Activated CD4-positive, alpha-beta T cell treated with anti-CD3 and anti-CD28 coated beads for 36 hours (primary cell): ENCODE measurements at regions of chr11 and their contacts with region 1.

Region 1: GRCh38 chr11:26286472-26287066 is 45.4 kb upstream of the ANO3 start:
- DNase-seq: peak; percentile 3
- ATAC-seq: no peak
- H3K4me3 Mint-ChIP-seq: no peak overlapping the region
- H3K27ac Mint-ChIP-seq: no peak overlapping the region
- H3K4me1 Mint-ChIP-seq: peaks cover 3% of the 10 kb centered on the region
- H3K27me3 Mint-ChIP-seq: peaks cover 9% of the 10 kb centered on the region

Region 2: DNA sequence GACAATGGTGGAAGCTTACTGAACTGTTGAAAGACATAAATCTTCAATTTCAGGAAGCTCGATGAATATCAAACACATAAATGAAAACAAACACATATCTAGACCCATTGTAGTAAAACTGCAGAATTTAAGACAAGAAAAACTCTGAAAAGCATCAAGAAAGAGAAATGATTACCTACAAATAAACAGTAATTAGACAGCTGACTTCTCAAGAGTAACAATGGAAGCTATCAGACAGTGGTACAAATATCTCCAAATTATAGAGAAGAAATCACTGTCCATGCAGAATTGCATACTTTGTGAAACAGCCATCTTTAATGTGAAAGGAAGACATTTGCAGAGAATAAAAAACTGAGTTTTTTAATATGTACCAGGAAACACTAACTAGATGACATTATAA is 91.0 kb after region 1 on chr11:
- CTCF ChIA-PET with region 1: no interaction called
- POLR2A ChIA-PET with region 1: no interaction called
- intact Hi-C with region 1: no loop called
- DNase-seq: no peak
- ATAC-seq: no peak
- H3K4me3 Mint-ChIP-seq: no peak overlapping the region
- H3K27ac Mint-ChIP-seq: no peak overlapping the region
- H3K4me1 Mint-ChIP-seq: no peaks in the 10 kb centered on the region
- H3K27me3 Mint-ChIP-seq: no peaks in the 10 kb centered on the region

Region 3: GRCh38 chr11:26649884-26650283 is 363.3 kb after region 1 on chr11:
- CTCF ChIA-PET with region 1: no interaction called
- POLR2A ChIA-PET with region 1: no interaction called
- intact Hi-C with region 1: loop called (anchors 2 to 5 kb)
- DNase-seq: peak; percentile 54
- ATAC-seq: no peak
- H3K4me3 Mint-ChIP-seq: no peak overlapping the region
- H3K27ac Mint-ChIP-seq: no peak overlapping the region
- H3K4me1 Mint-ChIP-seq: no peaks in the 10 kb centered on the region
- H3K27me3 Mint-ChIP-seq: peaks cover 3% of the 10 kb centered on the region

Region 4: DNA sequence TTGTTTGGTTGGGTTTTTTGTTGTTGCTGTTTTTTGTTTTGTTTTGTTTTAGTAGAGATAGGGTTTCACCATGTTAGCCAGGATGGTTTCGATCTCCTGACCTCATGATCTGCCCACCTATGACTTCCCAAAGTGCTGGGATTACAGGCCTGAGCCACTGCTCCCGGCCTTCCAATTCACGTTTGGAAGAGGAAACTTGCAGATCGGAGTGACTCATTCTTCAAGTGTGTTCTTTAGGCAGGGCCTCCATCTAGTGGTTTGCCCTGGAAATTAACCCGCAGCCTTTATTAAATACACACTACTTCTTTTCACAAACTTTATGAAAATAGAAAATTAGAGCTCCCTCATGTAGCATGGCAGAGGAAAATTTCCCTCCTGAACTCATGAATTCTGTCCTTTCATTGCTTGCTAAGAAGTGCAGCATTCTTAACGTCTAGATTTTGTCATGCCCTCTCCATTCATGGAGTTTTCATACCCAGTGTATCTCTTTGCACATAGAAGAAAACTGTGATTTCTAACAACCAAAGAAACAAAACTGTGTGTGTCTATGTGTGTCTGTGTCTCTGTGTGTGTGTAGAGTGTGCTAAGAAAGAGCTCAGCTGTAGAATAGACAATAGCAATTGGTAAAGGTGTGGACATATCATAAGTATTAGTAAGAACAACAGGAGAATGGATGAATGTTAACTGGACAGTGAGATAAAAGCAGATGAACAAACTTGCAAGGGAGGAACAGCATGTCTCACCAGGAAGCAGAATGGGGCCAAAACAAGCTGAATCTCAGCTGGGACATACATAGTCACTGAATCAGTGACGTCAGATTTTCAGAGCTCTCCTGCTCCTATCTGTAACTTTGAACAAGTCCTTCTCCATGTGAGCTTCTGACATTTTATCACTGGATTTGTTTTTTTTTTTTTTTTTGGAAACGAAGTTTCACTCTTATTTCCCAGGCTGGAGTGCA is 872.4 kb after region 1 on chr11:
- CTCF ChIA-PET with region 1: no interaction called
- POLR2A ChIA-PET with region 1: no interaction called
- intact Hi-C with region 1: loop called in 1 of 2 experiments (anchors 10 kb)
- DNase-seq: peak; percentile 31
- ATAC-seq: no peak
- H3K4me3 Mint-ChIP-seq: no peak overlapping the region
- H3K27ac Mint-ChIP-seq: no peak overlapping the region
- H3K4me1 Mint-ChIP-seq: no peaks in the 10 kb centered on the region
- H3K27me3 Mint-ChIP-seq: peaks cover 9% of the 10 kb centered on the region